Head of caudate nucleus (tissue), 42 donors: ENCODE measurements at regions of chr4 and their contacts with region 1.

Region 1: GRCh38 chr4:112231779-112232713 is at the start of gene AP1AR:
- DNase-seq: peak; percentile 36 to 90 (median 79)

Region 2: GRCh38 chr4:111943795-111944203 is 288.2 kb before region 1 on chr4:
- intact Hi-C with region 1: no loop called
- DNase-seq: peak in 1 of 42 donors; percentile 7

Region 3: GRCh38 chr4:112099701-112100297 is 132.2 kb before region 1 on chr4:
- intact Hi-C with region 1: loop called (anchors 5 kb)
- DNase-seq: no peak

Region 4: GRCh38 chr4:112145326-112145819 is 86.7 kb before region 1 on chr4 and contains the start of gene FAM241A:
- intact Hi-C with region 1: loop called (anchors 5 kb)
- DNase-seq: peak; percentile 65 to 92 (median 86)

Region 5: DNA sequence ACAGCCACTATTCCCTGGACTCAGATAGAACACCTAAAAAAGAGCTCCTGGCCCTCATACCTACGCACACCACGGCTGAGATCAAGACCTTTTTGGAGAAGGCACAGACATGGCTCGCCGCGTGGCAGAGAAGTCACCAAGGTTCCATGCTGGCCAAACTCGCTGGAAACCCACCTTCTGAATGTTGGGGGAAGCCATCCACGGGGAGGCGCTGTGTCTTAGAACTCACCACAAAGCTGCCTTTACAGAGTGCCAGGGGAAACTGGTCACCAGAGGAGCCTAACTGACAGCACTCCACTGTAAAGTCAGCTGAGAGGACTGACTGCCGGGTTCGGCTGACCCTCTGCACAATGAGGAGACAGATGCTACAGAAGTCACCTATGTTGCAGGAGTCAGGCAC is 186.0 kb after region 1 on chr4:
- intact Hi-C with region 1: no loop called
- DNase-seq: no peak